ENCODE measurements at regions of chr4 and their contacts with region 1.

Region 1: DNA sequence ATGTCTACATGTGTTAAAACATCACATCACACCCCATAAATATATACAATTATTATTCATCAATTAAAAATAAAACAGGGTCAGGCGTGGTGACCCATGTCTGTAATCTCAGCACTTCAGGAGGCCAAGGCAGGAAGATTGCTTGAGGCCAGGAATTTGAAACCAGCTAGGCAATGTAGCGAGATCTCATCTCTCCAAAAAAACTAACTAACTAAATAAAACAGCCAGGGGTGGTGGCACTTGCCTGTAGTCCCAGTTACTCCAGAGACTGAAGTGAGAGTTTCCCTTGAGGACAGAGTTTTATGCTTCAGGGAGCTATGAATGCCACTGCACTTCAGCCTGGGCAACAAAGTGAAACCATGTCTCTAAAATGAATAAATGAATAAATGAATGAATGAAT is 792.5 kb upstream of the NDST4 start:
- DNase-seq: no peak

Region 2: DNA sequence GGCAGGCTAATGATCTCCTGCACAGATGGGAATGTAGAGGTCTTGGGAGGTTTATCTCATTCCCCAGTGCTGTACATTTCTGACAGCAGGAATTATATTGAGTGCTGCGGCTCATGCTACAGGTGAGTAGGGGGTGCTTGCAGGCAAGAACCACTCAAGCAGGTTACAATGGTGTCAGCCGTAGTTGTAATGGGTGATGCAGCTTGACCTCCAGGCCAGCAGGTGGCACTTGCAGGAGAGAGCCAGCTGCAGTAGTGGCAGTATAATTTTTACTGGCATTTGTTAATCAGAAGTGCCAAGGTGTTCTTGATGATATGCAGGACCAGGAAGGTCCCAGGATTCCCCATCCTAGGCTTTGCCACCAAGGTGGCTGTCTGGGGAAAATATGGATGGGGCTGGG is 32.9 kb before region 1 on chr4:
- intact Hi-C with region 1: loop called (anchors 2 kb)
- DNase-seq: no peak

Region 3: GRCh38 chr4:115938764-115939443 is 33.0 kb after region 1 on chr4:
- intact Hi-C with region 1: no loop called
- DNase-seq: no peak

Region 4: DNA sequence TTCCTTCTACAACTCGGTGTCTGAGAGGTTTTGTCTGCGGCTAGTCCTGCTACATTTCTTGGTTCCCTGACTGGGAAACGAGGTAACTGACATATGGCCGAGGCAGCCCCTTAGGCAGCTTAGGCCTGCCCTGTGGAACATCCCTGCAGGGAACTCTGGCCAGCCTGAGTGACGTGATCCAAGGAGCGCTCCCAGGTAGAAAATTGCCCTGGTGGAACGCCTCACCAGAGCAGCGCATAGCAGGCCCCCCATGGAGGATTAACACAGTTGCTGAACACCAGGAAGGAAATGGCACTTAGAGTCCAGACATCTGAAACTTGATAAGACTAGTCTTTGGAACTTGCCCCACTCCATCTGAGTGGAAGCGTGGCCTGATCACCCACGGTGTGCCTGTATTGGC is 44.9 kb after region 1 on chr4:
- intact Hi-C with region 1: no loop called
- DNase-seq: no peak

Measured in posterior cingulate gyrus (tissue), 11 donors.